ENCODE measurements at regions of chr1 and their contacts with region 1.

Region 1: GRCh38 chr1:63773815-63774616 is at the start of gene ROR1:
- DNase-seq: peak; percentile 85
- H3K4me3 Mint-ChIP-seq: peak within 1 kb of the TSS; percentile 93
- H3K27ac Mint-ChIP-seq: peak within 1 kb of the TSS; percentile 29
- H3K4me1 Mint-ChIP-seq: peaks cover 16% of the 10 kb centered on the region
- H3K27me3 Mint-ChIP-seq: no peaks in the 10 kb centered on the region
- CTCF ChIP-seq: peak; percentile 57
- total RNA-seq, gene ROR1: 4.6 and 10.3 TPM in 2 replicates

Region 2: DNA sequence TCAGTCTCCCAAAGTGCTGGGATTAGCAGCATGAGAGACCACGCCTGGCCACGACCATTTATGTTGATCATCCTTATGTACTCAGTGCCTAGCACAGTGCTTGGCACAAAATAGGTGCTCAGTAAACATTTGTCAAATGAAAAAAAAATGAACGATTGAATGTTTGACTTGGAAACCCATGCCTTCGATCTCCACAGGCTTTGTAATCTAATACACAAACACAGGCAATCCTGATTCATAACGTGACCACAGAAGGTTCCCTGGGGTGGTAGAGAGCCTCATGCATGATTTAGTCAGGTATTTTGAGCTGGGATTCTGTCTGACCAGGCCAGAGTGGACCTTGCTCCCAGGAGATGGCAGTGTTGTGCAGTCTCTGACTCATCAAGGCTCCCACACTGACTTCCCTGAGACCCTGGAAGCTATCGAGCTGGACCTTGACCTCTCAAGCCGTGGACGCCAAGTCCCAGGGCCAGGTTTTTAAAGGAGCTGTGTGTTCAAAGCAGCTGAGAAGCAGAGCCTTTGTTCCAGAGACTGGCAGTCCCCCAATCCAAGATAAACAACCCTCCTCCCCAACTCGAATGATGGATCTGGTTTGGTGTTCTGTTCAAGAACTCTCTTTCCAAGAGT is 99.7 kb before region 1 on chr1:
- CTCF ChIA-PET with region 1: interaction called, 4 read pairs
- POLR2A ChIA-PET with region 1: interaction called, 4 read pairs
- intact Hi-C with region 1: loop called (anchors 1 kb)
- DNase-seq: peak; percentile 90
- H3K4me3 Mint-ChIP-seq: no peak overlapping the region
- H3K27ac Mint-ChIP-seq: no peak overlapping the region
- H3K4me1 Mint-ChIP-seq: peaks cover 11% of the 10 kb centered on the region
- H3K27me3 Mint-ChIP-seq: no peaks in the 10 kb centered on the region
- CTCF ChIP-seq: peak; percentile 58

Region 3: DNA sequence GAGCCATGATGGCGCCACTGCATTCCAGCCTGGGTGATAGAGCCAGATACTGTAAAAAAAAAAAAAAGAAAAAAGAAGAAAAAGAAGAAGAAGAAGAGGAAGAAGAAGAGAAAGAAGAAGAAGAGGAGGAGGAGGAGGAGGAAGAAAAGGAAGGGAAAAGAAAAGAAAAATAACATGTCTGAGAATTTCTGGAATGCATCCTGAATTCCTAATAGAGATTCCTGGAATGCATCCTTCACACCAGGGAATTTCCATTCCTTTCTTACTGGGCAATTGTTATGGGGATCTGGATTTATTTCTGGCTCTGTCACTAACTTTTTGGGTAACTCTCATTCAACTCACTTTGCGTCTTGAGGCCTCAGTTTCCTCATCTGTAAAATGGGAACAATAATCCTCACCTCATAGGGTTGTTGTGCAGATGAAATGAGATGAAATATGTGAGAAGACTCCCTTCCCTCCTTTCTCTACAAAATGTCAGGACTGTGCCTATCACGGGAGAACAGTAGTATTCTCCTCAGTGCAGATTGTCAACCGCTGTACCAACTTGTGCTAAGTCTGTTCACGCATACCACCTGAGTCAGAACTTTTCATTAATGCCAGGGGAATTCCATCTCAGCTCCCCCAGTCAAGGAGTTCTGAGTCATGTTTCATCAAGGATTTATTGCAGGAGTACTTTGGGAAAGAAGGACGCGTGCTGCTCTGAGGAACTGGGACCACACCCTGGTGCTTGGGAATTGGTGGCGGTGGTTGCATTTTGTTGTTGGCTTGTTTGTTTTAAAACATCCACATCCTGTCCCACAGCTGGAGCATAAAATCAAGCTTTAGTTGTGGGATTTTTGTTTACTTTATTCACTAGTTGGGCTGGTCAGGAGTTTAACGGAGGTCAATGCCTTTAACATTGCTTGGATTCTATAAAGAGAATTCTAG is 42.6 kb before region 1 on chr1:
- CTCF ChIA-PET with region 1: interaction called, 13 read pairs
- POLR2A ChIA-PET with region 1: interaction called, 12 read pairs
- intact Hi-C with region 1: no loop called
- DNase-seq: peak; percentile 96
- H3K4me3 Mint-ChIP-seq: peak overlapping the region; percentile 56
- H3K27ac Mint-ChIP-seq: peak overlapping the region; percentile 80
- H3K4me1 Mint-ChIP-seq: peaks cover 29% of the 10 kb centered on the region
- H3K27me3 Mint-ChIP-seq: no peaks in the 10 kb centered on the region
- CTCF ChIP-seq: no peak

Region 4: GRCh38 chr1:63917571-63918417 is 143.8 kb after region 1 on chr1:
- CTCF ChIA-PET with region 1: interaction called, 3 read pairs
- POLR2A ChIA-PET with region 1: no interaction called
- intact Hi-C with region 1: loop called (anchors 5 kb)
- DNase-seq: peak; percentile 46
- H3K4me3 Mint-ChIP-seq: no peak overlapping the region
- H3K27ac Mint-ChIP-seq: no peak overlapping the region
- H3K4me1 Mint-ChIP-seq: peaks cover 16% of the 10 kb centered on the region
- H3K27me3 Mint-ChIP-seq: no peaks in the 10 kb centered on the region
- CTCF ChIP-seq: peak; percentile 12

Region 5: GRCh38 chr1:64038965-64039926 is 265.2 kb after region 1 on chr1:
- CTCF ChIA-PET with region 1: interaction called, 3 read pairs
- POLR2A ChIA-PET with region 1: interaction called, 18 read pairs
- intact Hi-C with region 1: loop called (anchors 10 kb)
- DNase-seq: peak; percentile 98
- H3K4me3 Mint-ChIP-seq: peak overlapping the region; percentile 28
- H3K27ac Mint-ChIP-seq: peak overlapping the region; percentile 82
- H3K4me1 Mint-ChIP-seq: peaks cover 64% of the 10 kb centered on the region
- H3K27me3 Mint-ChIP-seq: no peaks in the 10 kb centered on the region
- CTCF ChIP-seq: no peak